Activated T-helper 2 cell treated with anti-CD3 and anti-CD28 coated beads, Interferon-gamma antibody, Interleukin-2, Interleukin-4, amounts not matched to agents 10 μg/mL and 5 μg/mL and 100 μg/mL, durations not matched to agents 14 hours and 24 hours and 36 hours (primary cell): ENCODE measurements at regions of chr16 and their contacts with region 1.

Region 1: GRCh38 chr16:68510775-68511174 is 28.3 kb upstream of the ZFP90 start:
- DNase-seq: no peak
- H3K4me3 Mint-ChIP-seq: no peak overlapping the region
- H3K27ac Mint-ChIP-seq: no peak overlapping the region
- H3K4me1 Mint-ChIP-seq: peaks cover 3% of the 10 kb centered on the region
- H3K27me3 Mint-ChIP-seq: peaks cover 19% of the 10 kb centered on the region

Region 2: GRCh38 chr16:68367030-68367429 is 143.7 kb before region 1 on chr16:
- intact Hi-C with region 1: loop called (anchors 1 kb)
- DNase-seq: peak; percentile 27
- H3K4me3 Mint-ChIP-seq: no peak overlapping the region
- H3K27ac Mint-ChIP-seq: no peak overlapping the region
- H3K4me1 Mint-ChIP-seq: peaks cover 28% of the 10 kb centered on the region
- H3K27me3 Mint-ChIP-seq: peaks cover 30% of the 10 kb centered on the region

Region 3: GRCh38 chr16:68396481-68396880 is 114.3 kb before region 1 on chr16:
- intact Hi-C with region 1: loop called (anchors 2 kb)
- DNase-seq: peak; percentile 34
- H3K4me3 Mint-ChIP-seq: no peak overlapping the region
- H3K27ac Mint-ChIP-seq: no peak overlapping the region
- H3K4me1 Mint-ChIP-seq: peaks cover 9% of the 10 kb centered on the region
- H3K27me3 Mint-ChIP-seq: peaks cover 30% of the 10 kb centered on the region

Region 4: GRCh38 chr16:68524069-68524820 is 13.5 kb after region 1 on chr16:
- intact Hi-C with region 1: no loop called
- DNase-seq: no peak
- H3K4me3 Mint-ChIP-seq: no peak overlapping the region
- H3K27ac Mint-ChIP-seq: no peak overlapping the region
- H3K4me1 Mint-ChIP-seq: peaks cover 11% of the 10 kb centered on the region
- H3K27me3 Mint-ChIP-seq: peaks cover 6% of the 10 kb centered on the region

Region 5: GRCh38 chr16:68599586-68599985 is 88.8 kb after region 1 on chr16:
- intact Hi-C with region 1: no loop called
- DNase-seq: no peak
- H3K4me3 Mint-ChIP-seq: no peak overlapping the region
- H3K27ac Mint-ChIP-seq: no peak overlapping the region
- H3K4me1 Mint-ChIP-seq: no peaks in the 10 kb centered on the region
- H3K27me3 Mint-ChIP-seq: no peaks in the 10 kb centered on the region